CD4-positive, alpha-beta memory T cell (primary cell): ENCODE measurements at regions of chr15 and their contacts with region 1.

Region 1: GRCh38 chr15:63600616-63601025 is 3.4 kb downstream of the FBXL22 start:
- DNase-seq: peak; percentile 90 to 95 (median 93)
- H3K4me3 ChIP-seq: peak overlapping the region; percentile 19 to 70
- H3K4me3 Mint-ChIP-seq: peak overlapping the region; percentile 92 to 98 (median 95)
- H3K27ac ChIP-seq: peak overlapping the region; percentile 69
- H3K27ac Mint-ChIP-seq: peak overlapping the region; percentile 94 to 97 (median 96)
- H3K4me1 ChIP-seq: peaks cover 39% of the 10 kb centered on the region
- H3K4me1 Mint-ChIP-seq: peaks cover 26 to 84% (median 47%) of the 10 kb centered on the region in 4 donors
- H3K27me3 ChIP-seq: no peaks in the 10 kb centered on the region
- H3K27me3 Mint-ChIP-seq: no peaks in the 10 kb centered on the region

Region 2: GRCh38 chr15:63362196-63362595 is 238.4 kb before region 1 on chr15:
- CTCF ChIA-PET with region 1: no interaction called
- POLR2A ChIA-PET with region 1: no interaction called
- intact Hi-C with region 1: no loop called
- DNase-seq: no peak
- H3K4me3 ChIP-seq: no peak overlapping the region
- H3K4me3 Mint-ChIP-seq: no peak overlapping the region
- H3K27ac ChIP-seq: no peak overlapping the region
- H3K27ac Mint-ChIP-seq: no peak overlapping the region
- H3K4me1 ChIP-seq: no peaks in the 10 kb centered on the region
- H3K4me1 Mint-ChIP-seq: no peaks in the 10 kb centered on the region
- H3K27me3 ChIP-seq: no peaks in the 10 kb centered on the region
- H3K27me3 Mint-ChIP-seq: peaks cover 10 to 12% of the 10 kb centered on the region in 2 donors

Region 3: GRCh38 chr15:63466378-63467192 is 134.0 kb before region 1 on chr15:
- CTCF ChIA-PET with region 1: interaction called, 64 read pairs
- POLR2A ChIA-PET with region 1: interaction called, 29 read pairs
- intact Hi-C with region 1: loop called (anchors 1 kb)
- DNase-seq: peak; percentile 72 to 77 (median 74)
- H3K4me3 ChIP-seq: no peak overlapping the region
- H3K4me3 Mint-ChIP-seq: peak overlapping the region in 1 of 8 donors; percentile 20
- H3K27ac ChIP-seq: no peak overlapping the region
- H3K27ac Mint-ChIP-seq: peak overlapping the region in 6 of 7 donors; percentile 47 to 89 (median 86)
- H3K4me1 ChIP-seq: peaks cover 9% of the 10 kb centered on the region
- H3K4me1 Mint-ChIP-seq: peaks cover 18 to 26% (median 24%) of the 10 kb centered on the region in 4 donors
- H3K27me3 ChIP-seq: no peaks in the 10 kb centered on the region
- H3K27me3 Mint-ChIP-seq: peaks cover 0 to 2% of the 10 kb centered on the region in 2 donors

Region 4: DNA sequence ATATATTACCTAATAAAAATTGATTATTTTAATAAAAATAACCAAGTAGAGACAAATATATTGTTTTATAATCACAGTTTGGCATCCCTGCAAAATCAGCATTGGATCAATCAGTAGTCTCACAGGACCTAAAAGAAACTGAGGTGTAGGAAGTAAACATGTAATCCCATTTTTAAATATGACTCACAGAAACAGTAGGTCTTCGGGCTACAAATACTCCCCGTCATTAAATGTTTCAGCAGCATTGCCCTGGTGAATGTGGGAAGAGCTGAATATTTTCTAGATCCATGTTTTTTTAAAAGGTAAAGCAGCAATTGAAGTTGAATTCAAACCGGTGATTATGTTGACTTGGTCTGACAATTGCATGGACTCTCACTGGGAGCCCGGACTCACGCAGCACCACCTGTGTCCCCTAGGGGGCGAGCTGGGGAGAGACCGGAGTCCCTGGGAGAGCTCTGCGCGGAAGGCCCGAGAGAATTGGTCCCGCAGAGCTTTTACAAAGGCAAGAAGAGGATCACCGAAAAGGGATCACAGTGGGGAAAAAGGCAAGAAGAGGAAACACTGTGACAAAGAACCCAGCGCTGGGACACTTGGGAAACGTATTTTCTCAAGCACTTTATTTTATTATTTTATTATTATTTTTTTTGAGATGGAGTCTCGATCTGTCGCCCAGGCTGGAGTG is 113.4 kb before region 1 on chr15:
- CTCF ChIA-PET with region 1: interaction called, 14 read pairs
- POLR2A ChIA-PET with region 1: interaction called, 34 read pairs
- intact Hi-C with region 1: no loop called
- DNase-seq: peak; percentile 82 to 87 (median 84)
- H3K4me3 ChIP-seq: no peak overlapping the region
- H3K4me3 Mint-ChIP-seq: peak overlapping the region in 7 of 8 donors; percentile 69 to 89 (median 72)
- H3K27ac ChIP-seq: peak overlapping the region; percentile 41
- H3K27ac Mint-ChIP-seq: peak overlapping the region; percentile 78 to 93 (median 89)
- H3K4me1 ChIP-seq: peaks cover 69% of the 10 kb centered on the region
- H3K4me1 Mint-ChIP-seq: peaks cover 40 to 81% (median 59%) of the 10 kb centered on the region in 4 donors
- H3K27me3 ChIP-seq: no peaks in the 10 kb centered on the region
- H3K27me3 Mint-ChIP-seq: no peaks in the 10 kb centered on the region

Region 5: DNA sequence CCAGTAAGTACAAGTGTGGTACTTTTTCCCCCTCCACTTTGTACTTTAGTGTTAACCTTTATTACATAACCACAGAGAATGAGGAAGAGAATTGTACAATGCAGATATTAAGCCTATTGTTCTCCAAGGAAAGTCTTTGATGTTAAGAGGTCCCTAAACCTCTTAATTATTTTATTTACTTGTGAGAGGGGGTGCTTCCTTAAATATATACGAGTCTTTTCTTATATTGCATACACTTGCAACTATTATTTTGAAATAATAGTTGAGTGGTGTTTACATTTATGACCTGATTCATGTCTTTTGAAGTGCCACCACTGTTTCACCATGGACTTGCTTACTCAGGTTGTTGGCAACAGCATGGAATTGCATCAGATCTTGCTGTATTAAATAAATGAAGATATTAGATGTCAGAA is 86.1 kb before region 1 on chr15:
- CTCF ChIA-PET with region 1: interaction called, 4 read pairs
- POLR2A ChIA-PET with region 1: interaction called, 11 read pairs
- intact Hi-C with region 1: no loop called
- DNase-seq: no peak
- H3K4me3 ChIP-seq: no peak overlapping the region
- H3K4me3 Mint-ChIP-seq: peak overlapping the region in 7 of 8 donors; percentile 33 to 84 (median 59)
- H3K27ac ChIP-seq: no peak overlapping the region
- H3K27ac Mint-ChIP-seq: peak overlapping the region; percentile 19 to 91 (median 70)
- H3K4me1 ChIP-seq: peaks cover 100% of the 10 kb centered on the region
- H3K4me1 Mint-ChIP-seq: peaks cover 67 to 97% (median 87%) of the 10 kb centered on the region in 4 donors
- H3K27me3 ChIP-seq: no peaks in the 10 kb centered on the region
- H3K27me3 Mint-ChIP-seq: no peaks in the 10 kb centered on the region

Region 6: DNA sequence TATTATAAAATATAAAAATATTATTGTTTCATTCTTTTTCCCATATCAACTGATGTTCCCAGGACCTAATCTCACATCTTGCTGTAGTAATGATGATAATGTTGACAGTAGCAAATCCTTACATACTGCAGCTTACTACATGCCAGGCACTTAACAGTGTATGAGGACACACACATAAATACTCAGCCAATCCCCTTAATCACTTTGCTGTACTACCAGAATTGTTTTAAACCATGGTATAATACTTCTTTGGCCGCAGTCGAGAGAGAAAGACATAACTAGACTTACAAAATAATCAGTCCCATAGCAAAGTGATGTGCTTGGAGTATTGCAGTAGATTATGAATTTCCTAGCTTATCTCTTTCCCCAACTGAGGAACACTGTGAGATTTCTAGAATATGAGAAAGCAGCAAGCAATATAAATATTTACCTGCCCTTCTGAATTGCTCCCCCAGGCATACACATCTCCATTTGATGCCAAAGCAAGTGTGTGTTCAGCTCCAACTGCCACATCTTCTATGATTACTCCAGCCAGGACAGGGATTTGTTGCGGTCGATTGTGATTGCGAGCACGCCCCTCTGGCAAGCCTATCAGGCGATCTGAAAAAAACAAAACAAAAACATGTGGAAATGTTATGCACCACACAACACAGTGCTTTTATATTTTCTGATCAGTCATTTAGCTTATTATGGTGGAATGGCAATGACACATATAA is 29.6 kb after region 1 on chr15:
- CTCF ChIA-PET with region 1: no interaction called
- POLR2A ChIA-PET with region 1: no interaction called
- intact Hi-C with region 1: no loop called
- DNase-seq: no peak
- H3K4me3 ChIP-seq: no peak overlapping the region
- H3K4me3 Mint-ChIP-seq: no peak overlapping the region
- H3K27ac ChIP-seq: no peak overlapping the region
- H3K27ac Mint-ChIP-seq: peak overlapping the region in 1 of 7 donors; percentile 85
- H3K4me1 ChIP-seq: no peaks in the 10 kb centered on the region
- H3K4me1 Mint-ChIP-seq: no peaks in the 10 kb centered on the region
- H3K27me3 ChIP-seq: no peaks in the 10 kb centered on the region
- H3K27me3 Mint-ChIP-seq: no peaks in the 10 kb centered on the region

Region 7: DNA sequence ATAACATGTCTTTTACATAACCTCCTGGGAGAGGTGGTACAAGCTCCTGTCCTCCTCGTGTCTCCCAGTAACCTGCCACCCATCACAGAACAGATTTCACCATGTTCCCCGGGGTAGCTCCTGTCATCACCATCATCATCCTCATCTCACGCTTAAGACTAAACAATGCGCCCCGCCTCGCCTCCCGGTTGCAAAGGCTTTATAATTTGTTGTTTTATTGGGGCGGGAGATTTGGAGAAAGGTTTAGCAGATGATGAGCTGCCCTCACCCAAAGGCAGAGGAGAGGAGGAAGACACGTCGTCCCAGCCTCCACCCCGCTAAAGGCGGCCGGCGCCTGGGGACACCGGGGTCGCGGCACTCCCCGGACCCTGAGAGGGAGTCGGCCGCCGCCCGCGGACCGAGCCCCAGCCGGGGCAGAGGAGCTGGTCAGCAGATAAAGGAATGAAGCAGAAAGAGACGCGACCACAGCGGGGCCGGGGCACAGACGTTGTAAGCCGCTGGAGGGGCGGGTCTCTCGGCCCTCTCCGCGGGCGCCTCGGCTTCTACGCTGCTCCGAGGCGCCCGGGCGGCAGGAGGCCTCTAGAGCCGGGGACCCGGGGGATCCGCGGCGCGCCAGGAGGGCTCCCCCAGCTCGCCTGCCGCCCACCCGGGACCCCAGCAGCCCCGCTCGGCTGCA is 232.5 kb after region 1 on chr15:
- CTCF ChIA-PET with region 1: no interaction called
- POLR2A ChIA-PET with region 1: interaction called, 3 read pairs
- intact Hi-C with region 1: loop called (anchors 10 kb)
- DNase-seq: peak in 4 of 5 donors; percentile 40 to 53 (median 46)
- H3K4me3 ChIP-seq: peak overlapping the region; percentile 53 to 69
- H3K4me3 Mint-ChIP-seq: peak overlapping the region; percentile 94 to 98 (median 96)
- H3K27ac ChIP-seq: peak overlapping the region; percentile 94
- H3K27ac Mint-ChIP-seq: peak overlapping the region; percentile 95 to 100 (median 97)
- H3K4me1 ChIP-seq: peaks cover 56% of the 10 kb centered on the region
- H3K4me1 Mint-ChIP-seq: peaks cover 39 to 62% (median 48%) of the 10 kb centered on the region in 4 donors
- H3K27me3 ChIP-seq: no peaks in the 10 kb centered on the region
- H3K27me3 Mint-ChIP-seq: no peaks in the 10 kb centered on the region

Region 8: DNA sequence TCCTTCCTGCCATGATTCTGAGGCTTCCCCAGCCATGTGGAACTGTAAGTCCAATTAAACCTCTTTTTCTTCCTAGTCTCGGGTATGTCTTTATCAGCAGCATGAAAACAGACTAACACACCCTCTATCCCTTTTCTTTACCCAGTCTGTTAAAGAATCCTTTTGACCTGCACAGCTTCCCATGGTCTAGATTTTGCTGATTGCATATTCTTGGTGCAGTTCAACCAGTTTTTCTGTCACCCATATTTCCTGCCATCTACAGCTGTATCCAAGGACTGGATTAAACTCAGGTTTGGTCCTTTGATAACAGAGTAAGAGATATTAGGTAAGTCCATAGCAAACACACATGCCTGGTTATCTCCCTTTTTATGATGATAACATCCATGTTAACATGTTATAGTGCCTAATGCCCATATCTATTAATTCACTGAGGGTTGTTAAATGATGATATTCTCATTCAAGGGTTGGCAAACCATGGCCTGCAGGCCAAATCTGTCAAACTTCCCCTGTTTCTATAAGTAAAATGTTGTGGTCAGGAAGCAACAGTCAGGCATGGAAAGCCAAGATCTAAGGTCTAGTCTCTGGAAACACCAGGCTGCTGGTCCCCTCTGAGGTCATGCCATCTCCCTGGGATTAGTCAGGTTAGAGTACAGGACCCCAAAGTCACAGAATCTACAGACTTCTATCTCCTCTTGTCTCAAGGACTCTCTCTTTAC is 248.0 kb after region 1 on chr15:
- CTCF ChIA-PET with region 1: no interaction called
- POLR2A ChIA-PET with region 1: no interaction called
- intact Hi-C with region 1: no loop called
- DNase-seq: no peak
- H3K4me3 ChIP-seq: no peak overlapping the region
- H3K4me3 Mint-ChIP-seq: no peak overlapping the region
- H3K27ac ChIP-seq: no peak overlapping the region
- H3K27ac Mint-ChIP-seq: peak overlapping the region; percentile 30 to 89 (median 53)
- H3K4me1 ChIP-seq: peaks cover 9% of the 10 kb centered on the region
- H3K4me1 Mint-ChIP-seq: peaks cover 6 to 16% (median 12%) of the 10 kb centered on the region in 4 donors
- H3K27me3 ChIP-seq: no peaks in the 10 kb centered on the region
- H3K27me3 Mint-ChIP-seq: peaks cover 0 to 1% of the 10 kb centered on the region in 2 donors

Region 9: DNA sequence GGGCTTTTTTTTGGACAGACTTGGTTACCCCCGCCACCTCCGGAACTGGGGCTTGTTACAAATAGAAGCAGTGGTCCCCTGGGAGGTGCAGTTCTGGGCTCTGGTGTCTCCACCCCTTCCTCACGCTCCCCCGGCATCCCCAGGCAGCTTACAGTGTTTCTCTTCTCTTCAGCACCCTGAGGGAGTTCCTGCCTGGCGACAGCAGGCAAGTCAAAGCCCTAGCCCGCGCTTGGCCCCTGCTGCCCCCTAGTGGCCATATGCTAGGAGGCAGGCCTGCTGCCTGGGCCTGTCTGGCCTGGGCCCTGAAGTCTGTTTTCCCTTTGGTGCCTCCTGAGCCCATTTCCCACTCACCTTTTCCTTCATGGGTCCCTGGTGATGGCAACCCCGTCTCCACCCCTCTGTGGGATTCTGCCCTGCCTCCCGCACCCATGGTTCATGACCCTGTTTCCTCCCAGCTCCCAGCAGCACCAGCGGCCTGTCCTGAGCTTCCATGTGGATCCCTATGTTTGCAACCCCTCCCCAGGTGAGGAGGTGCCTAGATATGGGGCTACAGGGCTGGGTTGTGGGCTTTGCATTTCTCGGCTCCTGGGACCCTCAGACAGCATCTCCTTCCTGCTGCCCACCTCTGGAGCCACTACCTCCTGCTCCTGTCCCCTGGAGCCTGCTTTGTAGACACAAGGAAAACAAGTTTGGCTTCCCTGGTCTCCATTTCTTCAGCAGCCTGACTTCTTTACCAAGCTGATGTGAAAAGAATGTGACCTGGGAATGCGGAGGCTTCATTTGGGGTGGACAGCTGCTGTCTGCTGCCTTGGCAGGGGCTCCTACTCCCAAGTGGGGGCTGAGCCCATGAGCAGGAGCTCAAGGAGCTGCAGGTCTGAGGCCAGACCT is 553.1 kb after region 1 on chr15:
- CTCF ChIA-PET with region 1: interaction called, 3 read pairs
- POLR2A ChIA-PET with region 1: no interaction called
- intact Hi-C with region 1: loop called (anchors 5 kb)
- DNase-seq: peak; percentile 84 to 89 (median 86)
- H3K4me3 ChIP-seq: no peak overlapping the region
- H3K4me3 Mint-ChIP-seq: peak overlapping the region; percentile 72 to 92 (median 80)
- H3K27ac ChIP-seq: peak overlapping the region; percentile 11
- H3K27ac Mint-ChIP-seq: peak overlapping the region in 6 of 7 donors; percentile 18 to 87 (median 76)
- H3K4me1 ChIP-seq: peaks cover 41% of the 10 kb centered on the region
- H3K4me1 Mint-ChIP-seq: peaks cover 19 to 51% (median 32%) of the 10 kb centered on the region in 4 donors
- H3K27me3 ChIP-seq: peaks cover 6% of the 10 kb centered on the region
- H3K27me3 Mint-ChIP-seq: peaks cover 5 to 8% of the 10 kb centered on the region in 2 donors